Mammary epithelial cell (primary cell): ENCODE measurements at regions of chr3 and their contacts with region 1.

Region 1: DNA sequence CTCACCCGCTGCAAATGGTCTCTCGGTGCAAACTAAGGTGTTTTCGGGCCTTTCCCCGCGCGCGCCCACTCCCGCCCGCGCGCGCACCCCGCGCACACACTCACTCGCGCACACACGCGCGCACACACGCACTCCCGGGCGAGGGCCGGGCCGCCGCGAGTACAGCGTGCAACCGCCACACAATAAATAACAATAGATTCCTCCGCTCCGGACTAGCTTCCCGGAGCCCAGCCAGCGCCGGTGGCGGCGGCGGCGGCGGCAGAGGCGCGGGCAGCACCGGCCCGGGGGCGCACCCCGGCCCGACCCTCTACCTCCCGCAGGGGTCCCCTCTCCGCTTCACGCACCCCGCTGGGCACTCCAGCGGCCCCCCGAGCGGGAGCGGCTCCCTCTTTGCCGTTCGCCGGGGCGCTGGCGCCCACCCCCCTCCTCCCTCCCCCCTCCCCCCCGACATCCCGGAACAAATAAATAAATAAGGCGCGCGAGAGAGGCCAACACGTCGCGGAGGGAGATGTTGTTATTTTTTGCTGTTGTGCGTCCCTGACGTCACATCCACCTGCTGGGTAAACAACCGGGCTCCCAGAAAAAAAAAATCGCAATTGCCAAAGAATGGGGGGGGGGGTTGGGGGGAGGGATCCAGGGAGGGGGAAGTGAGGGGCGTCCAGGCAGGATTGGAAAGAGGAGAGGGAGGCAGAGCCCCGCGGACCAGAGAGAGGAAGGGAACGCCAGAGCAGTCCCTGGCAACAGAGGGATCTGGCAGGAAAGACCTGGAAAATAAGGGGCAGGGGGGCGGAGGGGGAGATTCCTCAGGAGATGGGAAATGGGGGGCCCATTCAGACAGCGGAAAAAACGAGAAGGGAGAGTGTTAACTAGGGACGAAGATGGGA is at the start of gene FOXP1:
- DNase-seq: peak; percentile 67
- H3K4me3 ChIP-seq: peak within 1 kb of the TSS; percentile 88 to 98 (median 89)
- H3K27ac ChIP-seq: peak within 1 kb of the TSS; percentile 80
- H3K4me1 ChIP-seq: peaks cover 15% of the 10 kb centered on the region
- H3K27me3 ChIP-seq: no peaks in the 10 kb centered on the region
- CTCF ChIP-seq: no peak
- total RNA-seq, gene FOXP1: 49.5 to 62.5 TPM

Region 2: GRCh38 chr3:71006810-71007785 is 576.7 kb before region 1 on chr3:
- CTCF ChIA-PET with region 1: interaction called, 6 read pairs
- dilution Hi-C with region 1: no loop called
- in situ Hi-C with region 1: loop called in 1 of 2 experiments (anchors 10 kb)
- intact Hi-C with region 1: loop called (anchors 1 kb)
- DNase-seq: peak; percentile 93
- H3K4me3 ChIP-seq: no peak overlapping the region
- H3K27ac ChIP-seq: peak overlapping the region; percentile 91
- H3K4me1 ChIP-seq: peaks cover 33% of the 10 kb centered on the region
- H3K27me3 ChIP-seq: no peaks in the 10 kb centered on the region
- CTCF ChIP-seq: peak; percentile 27 to 56

Region 3: GRCh38 chr3:71111784-71112440 is 471.9 kb before region 1 on chr3:
- CTCF ChIA-PET with region 1: no interaction called
- dilution Hi-C with region 1: no loop called
- in situ Hi-C with region 1: no loop called
- intact Hi-C with region 1: loop called (anchors 5 kb)
- DNase-seq: peak; percentile 89
- H3K4me3 ChIP-seq: no peak overlapping the region
- H3K27ac ChIP-seq: peak overlapping the region; percentile 67
- H3K4me1 ChIP-seq: peaks cover 23% of the 10 kb centered on the region
- H3K27me3 ChIP-seq: no peaks in the 10 kb centered on the region
- CTCF ChIP-seq: no peak

Region 4: GRCh38 chr3:71421820-71422566 is 161.8 kb before region 1 on chr3:
- CTCF ChIA-PET with region 1: no interaction called
- dilution Hi-C with region 1: no loop called
- in situ Hi-C with region 1: loop called in 1 of 2 experiments (anchors 10 kb)
- intact Hi-C with region 1: loop called (anchors 2 kb)
- DNase-seq: no peak
- H3K4me3 ChIP-seq: no peak overlapping the region
- H3K27ac ChIP-seq: no peak overlapping the region
- H3K4me1 ChIP-seq: peaks cover 42% of the 10 kb centered on the region
- H3K27me3 ChIP-seq: no peaks in the 10 kb centered on the region
- CTCF ChIP-seq: no peak

Region 5: GRCh38 chr3:71504250-71505036 is 79.4 kb before region 1 on chr3:
- CTCF ChIA-PET with region 1: interaction called, 3 read pairs
- dilution Hi-C with region 1: no loop called
- in situ Hi-C with region 1: loop called in 1 of 2 experiments (anchors 10 kb)
- intact Hi-C with region 1: loop called (anchors 1 kb)
- DNase-seq: peak; percentile 89
- H3K4me3 ChIP-seq: peak overlapping the region; percentile 15 to 30 (median 26)
- H3K27ac ChIP-seq: peak overlapping the region; percentile 93
- H3K4me1 ChIP-seq: peaks cover 24% of the 10 kb centered on the region
- H3K27me3 ChIP-seq: no peaks in the 10 kb centered on the region
- CTCF ChIP-seq: no peak

Region 6: GRCh38 chr3:71652781-71653413 is 69.1 kb after region 1 on chr3:
- CTCF ChIA-PET with region 1: no interaction called
- dilution Hi-C with region 1: no loop called
- in situ Hi-C with region 1: no loop called
- intact Hi-C with region 1: loop called (anchors 5 kb)
- DNase-seq: peak; percentile 29
- H3K4me3 ChIP-seq: no peak overlapping the region
- H3K27ac ChIP-seq: no peak overlapping the region
- H3K4me1 ChIP-seq: peaks cover 6% of the 10 kb centered on the region
- H3K27me3 ChIP-seq: no peaks in the 10 kb centered on the region
- CTCF ChIP-seq: peak; percentile 52 to 55